ENCODE measurements at regions of chr3 and their contacts with region 1.

Region 1: DNA sequence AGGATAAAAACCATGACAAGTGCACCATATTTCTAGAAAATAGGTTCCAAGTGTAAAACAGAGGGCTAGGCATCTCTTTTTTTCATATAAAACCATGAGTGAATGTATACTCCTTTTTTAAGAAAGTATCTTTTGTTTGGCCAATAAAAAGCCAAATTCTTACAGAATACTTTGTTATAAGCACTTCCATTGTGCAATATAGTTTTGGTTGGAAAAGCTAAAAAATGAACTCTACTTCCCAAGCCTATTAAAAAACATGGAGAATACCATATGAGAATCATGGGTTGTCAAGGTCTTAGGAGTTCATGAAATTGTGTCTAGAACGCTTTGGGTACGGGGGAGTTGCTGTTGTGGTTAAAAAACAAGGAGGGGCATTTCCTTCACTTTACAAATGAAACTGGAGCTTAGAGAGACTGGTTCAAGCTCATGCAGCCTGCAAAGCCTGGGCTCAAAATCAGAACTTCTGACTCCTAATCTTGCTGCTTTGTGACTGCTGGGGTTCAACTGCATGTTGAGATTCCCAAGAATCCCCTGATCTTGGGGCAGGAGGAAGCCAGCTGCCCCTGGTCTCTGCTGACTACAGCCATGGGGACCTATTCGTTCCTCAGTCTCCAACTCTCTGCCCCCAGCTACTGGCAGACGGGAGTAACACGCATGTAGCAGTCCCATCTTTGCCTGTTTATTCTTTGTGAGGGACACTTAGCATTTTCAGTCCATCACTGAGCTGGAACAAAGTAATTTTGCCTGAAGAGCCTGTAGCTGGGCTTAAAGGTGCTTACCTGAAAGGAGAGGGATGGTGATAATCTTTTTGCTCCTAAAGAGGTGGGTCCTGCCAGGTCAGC is 229.1 kb downstream of the CHST2 start:
- DNase-seq: peak in 6 of 9 donors; percentile 5 to 48 (median 32)
- ATAC-seq: peak; percentile 51
- H3K4me3 ChIP-seq: no peak overlapping the region
- H3K4me3 Mint-ChIP-seq: peak overlapping the region; percentile 23 to 70 (median 54)
- H3K27ac ChIP-seq: no peak overlapping the region
- H3K27ac Mint-ChIP-seq: peak overlapping the region in 8 of 9 donors; percentile 16 to 79 (median 63)
- H3K4me1 ChIP-seq: peaks cover 0 to 20% of the 10 kb centered on the region in 2 donors
- H3K4me1 Mint-ChIP-seq: peaks cover 27 to 74% (median 69%) of the 10 kb centered on the region in 7 donors
- H3K27me3 ChIP-seq: no peaks in the 10 kb centered on the region
- H3K27me3 Mint-ChIP-seq: no peaks in the 10 kb centered on the region

Region 2: GRCh38 chr3:143124601-143125520 is 223.8 kb before region 1 on chr3:
- CTCF ChIA-PET with region 1: no interaction called
- POLR2A ChIA-PET with region 1: interaction called, 3 read pairs
- intact Hi-C with region 1: loop called (anchors 1 to 2 kb)
- DNase-seq: peak in 5 of 9 donors; percentile 12 to 39 (median 23)
- ATAC-seq: no peak
- H3K4me3 ChIP-seq: peak overlapping the region; percentile 9
- H3K4me3 Mint-ChIP-seq: peak overlapping the region; percentile 1 to 85 (median 80)
- H3K27ac ChIP-seq: peak overlapping the region; percentile 37
- H3K27ac Mint-ChIP-seq: peak overlapping the region in 8 of 9 donors; percentile 63 to 96 (median 90)
- H3K4me1 ChIP-seq: peaks cover 0 to 24% of the 10 kb centered on the region in 2 donors
- H3K4me1 Mint-ChIP-seq: peaks cover 27 to 76% (median 61%) of the 10 kb centered on the region in 7 donors
- H3K27me3 ChIP-seq: no peaks in the 10 kb centered on the region
- H3K27me3 Mint-ChIP-seq: no peaks in the 10 kb centered on the region

Region 3: DNA sequence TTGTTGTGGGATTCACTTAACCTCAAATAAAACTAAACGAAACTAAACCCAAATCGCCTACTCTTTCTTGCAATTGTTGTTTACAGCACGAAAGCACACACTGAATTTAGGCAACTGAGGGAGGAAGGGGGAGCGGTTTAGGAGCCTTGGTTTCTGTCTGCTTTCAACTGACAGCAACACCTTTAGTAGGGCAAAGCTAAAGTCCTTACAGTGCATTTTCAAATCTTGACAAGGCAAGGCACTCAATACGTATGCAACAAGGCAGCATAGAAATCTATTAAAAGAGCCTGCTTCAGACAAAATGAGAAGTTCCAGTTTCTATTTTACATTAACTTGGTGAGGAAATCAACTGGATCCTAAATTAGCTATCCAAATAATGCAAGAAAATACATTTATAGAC is 54.5 kb before region 1 on chr3:
- CTCF ChIA-PET with region 1: interaction called, 3 read pairs
- POLR2A ChIA-PET with region 1: no interaction called
- intact Hi-C with region 1: loop called in 1 of 2 experiments (anchors 2 kb)
- DNase-seq: no peak
- ATAC-seq: peak; percentile 32
- H3K4me3 ChIP-seq: no peak overlapping the region
- H3K4me3 Mint-ChIP-seq: peak overlapping the region in 4 of 10 donors; percentile 5 to 36 (median 12)
- H3K27ac ChIP-seq: no peak overlapping the region
- H3K27ac Mint-ChIP-seq: peak overlapping the region in 3 of 9 donors; percentile 2 to 15 (median 9)
- H3K4me1 ChIP-seq: peaks cover 0 to 6% of the 10 kb centered on the region in 2 donors
- H3K4me1 Mint-ChIP-seq: peaks cover 16 to 42% (median 35%) of the 10 kb centered on the region in 7 donors
- H3K27me3 ChIP-seq: no peaks in the 10 kb centered on the region
- H3K27me3 Mint-ChIP-seq: no peaks in the 10 kb centered on the region